Caco-2 (cell line): ENCODE measurements at regions of chr14 and their contacts with region 1.

Region 1: DNA sequence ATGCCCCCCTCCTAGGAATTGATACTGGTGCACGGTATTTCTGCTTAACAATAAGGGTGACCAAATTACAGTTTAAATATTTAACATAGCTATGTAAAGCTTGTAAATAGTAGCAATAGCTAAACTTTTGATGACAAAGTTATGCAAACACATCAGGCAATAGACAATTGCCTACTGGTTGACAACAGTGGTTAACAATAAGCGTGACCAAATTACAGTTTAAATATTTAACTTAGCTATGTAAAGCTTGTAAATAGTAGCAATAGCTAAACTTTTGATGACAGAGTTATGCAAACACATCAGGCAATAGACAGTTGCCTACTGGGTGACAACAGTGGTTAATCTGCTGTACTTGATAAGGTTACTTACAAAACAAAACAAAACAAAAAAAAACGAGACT is 886.5 kb upstream of the FLRT2 start:
- DNase-seq: peak in 1 of 2 experiments; percentile 23
- H3K4me3 ChIP-seq: no peak overlapping the region
- H3K4me3 Mint-ChIP-seq: no peak overlapping the region
- H3K27ac Mint-ChIP-seq: no peak overlapping the region
- H3K4me1 ChIP-seq: 0 out of 2 replicates have a peak, but pooled peaks cover 4% of the 10 kb centered on the region
- H3K4me1 Mint-ChIP-seq: no peaks in the 10 kb centered on the region
- H3K27me3 ChIP-seq: no peaks in the 10 kb centered on the region; the same call in 1 of the 2 replicates
- H3K27me3 Mint-ChIP-seq: peaks cover 13% of the 10 kb centered on the region
- CTCF ChIP-seq: no peak

Region 2: DNA sequence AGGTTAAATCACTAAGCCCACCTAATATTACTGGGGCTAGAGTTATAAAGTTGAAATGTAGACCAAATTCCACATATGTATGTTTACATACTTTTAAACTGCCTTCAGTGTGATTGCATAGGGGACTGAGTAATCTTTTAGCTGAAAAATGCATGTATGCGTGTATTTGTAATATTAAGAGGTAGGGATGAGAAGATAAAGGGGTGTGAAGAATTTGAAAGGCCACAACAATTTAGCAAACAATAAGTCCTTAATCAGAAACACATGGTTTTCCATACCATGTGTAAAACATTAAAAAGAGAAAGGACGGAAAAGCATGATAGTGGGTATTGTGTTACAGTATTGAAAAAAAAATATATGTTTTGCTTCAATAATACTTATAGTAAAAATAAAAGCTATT is 33.4 kb before region 1 on chr14:
- CTCF ChIA-PET with region 1: no interaction called
- POLR2A ChIA-PET with region 1: no interaction called
- intact Hi-C with region 1: no loop called
- DNase-seq: no peak
- H3K4me3 ChIP-seq: no peak overlapping the region
- H3K4me3 Mint-ChIP-seq: no peak overlapping the region
- H3K27ac Mint-ChIP-seq: no peak overlapping the region
- H3K4me1 ChIP-seq: no peaks in the 10 kb centered on the region
- H3K4me1 Mint-ChIP-seq: no peaks in the 10 kb centered on the region
- H3K27me3 ChIP-seq: no peaks in the 10 kb centered on the region
- H3K27me3 Mint-ChIP-seq: no peaks in the 10 kb centered on the region
- CTCF ChIP-seq: no peak

Region 3: DNA sequence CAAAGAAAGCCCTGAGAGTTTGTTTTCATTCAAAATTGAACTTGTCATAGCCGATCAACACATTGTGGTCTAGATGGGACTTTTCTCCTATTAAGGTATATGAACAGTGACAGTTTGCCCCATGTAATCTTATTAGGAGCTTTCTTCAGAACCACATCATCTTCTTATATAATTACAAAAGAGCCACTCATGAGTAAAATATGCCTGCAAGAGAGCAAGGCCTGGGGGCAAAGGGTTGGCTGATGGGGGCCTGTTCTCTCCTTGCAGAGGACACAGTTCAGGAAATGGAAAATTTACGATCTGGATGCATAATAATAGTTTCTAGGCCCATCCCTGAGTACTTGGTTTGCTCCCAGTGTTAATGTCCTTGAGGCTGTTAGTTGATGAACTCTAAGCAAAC is 974.3 kb after region 1 on chr14:
- CTCF ChIA-PET with region 1: no interaction called
- POLR2A ChIA-PET with region 1: no interaction called
- intact Hi-C with region 1: loop called (anchors 5 kb)
- DNase-seq: no peak
- H3K4me3 ChIP-seq: no peak overlapping the region
- H3K4me3 Mint-ChIP-seq: no peak overlapping the region
- H3K27ac Mint-ChIP-seq: no peak overlapping the region
- H3K4me1 ChIP-seq: peaks cover 37% of the 10 kb centered on the region
- H3K4me1 Mint-ChIP-seq: peaks cover 8% of the 10 kb centered on the region
- H3K27me3 ChIP-seq: no peaks in the 10 kb centered on the region
- H3K27me3 Mint-ChIP-seq: no peaks in the 10 kb centered on the region
- CTCF ChIP-seq: no peak